ENCODE measurements at regions of chr11 and their contacts with region 1.

Region 1: DNA sequence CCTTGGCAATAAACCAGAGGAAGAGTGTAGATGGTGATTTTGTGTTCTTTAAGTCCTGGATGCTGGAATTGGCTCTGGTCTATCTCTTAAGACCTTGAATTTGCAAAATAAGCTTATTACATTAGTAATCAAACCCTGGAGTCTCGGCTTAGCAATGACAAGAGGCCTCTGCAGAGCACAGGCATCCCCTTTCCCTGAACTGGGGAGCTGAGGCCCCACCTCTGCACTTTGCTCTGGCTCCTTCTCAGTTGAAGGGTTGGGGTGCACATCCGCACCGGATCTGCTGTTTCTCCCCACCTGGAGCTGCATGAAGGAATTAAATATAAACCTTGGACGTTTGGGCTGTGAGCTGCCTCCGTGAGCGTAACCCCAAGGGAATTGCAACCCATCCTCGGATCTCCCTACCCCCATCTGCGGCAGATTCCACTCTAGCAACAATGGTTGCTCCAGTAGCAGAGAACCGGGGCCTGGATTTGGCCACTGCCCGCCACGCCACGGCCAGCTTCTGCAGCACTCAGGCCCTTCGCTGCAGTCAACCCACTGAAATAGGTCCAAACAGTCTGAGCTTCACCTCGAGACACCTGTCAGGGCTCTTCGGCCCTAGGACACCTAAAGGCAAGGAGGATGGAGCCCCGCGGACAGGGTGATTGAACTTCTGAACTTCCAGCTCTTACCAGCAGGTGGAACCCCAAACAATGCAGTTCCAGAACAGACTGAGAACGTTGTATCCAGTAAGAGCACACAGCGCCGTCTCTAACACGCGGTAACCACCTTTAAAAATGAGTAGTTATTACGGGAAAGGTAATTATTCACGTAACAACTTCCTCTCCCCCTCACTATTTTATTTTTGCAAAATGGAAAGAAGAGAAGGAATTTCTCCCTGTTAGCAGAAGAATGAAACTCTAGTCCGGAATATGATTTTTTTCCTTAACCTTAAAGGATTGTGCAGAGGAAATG is 54.8 kb upstream of the CAPRIN1 start:
- DNase-seq: peak; percentile 41 to 63
- ATAC-seq: peak; percentile 98 to 99
- H3K4me3 ChIP-seq: peak overlapping the region in 1 of 4 donors; percentile 10
- H3K27ac ChIP-seq: no peak overlapping the region
- H3K4me1 ChIP-seq: no peaks in the 10 kb centered on the region
- H3K27me3 ChIP-seq: no peaks in the 10 kb centered on the region
- CTCF ChIP-seq: peak; percentile 71 to 83 (median 80)
- POLR2A ChIP-seq: no peak

Region 2: DNA sequence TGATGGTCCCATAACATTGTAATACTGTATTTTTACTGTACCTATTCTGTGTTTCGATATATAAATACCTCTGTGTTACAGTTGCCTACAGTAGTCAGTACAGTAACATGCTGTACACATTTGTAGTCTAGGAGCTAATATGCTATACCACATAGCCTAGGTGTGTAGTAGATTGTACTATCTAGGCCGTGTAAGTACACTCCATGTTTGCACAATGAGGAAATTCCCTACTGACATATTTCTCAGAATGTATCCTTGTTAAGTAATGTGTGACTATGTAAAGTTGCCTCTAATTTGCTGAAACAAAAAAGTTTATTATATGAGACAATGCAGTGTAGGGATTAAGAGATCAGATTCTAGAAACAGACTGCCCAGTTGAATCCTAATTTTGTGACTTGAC is 76.1 kb after region 1 on chr11:
- in situ Hi-C with region 1: no loop called
- intact Hi-C with region 1: loop called (anchors 2 kb)
- DNase-seq: no peak
- ATAC-seq: no peak
- H3K4me3 ChIP-seq: no peak overlapping the region
- H3K27ac ChIP-seq: no peak overlapping the region
- H3K4me1 ChIP-seq: peaks cover 13 to 26% of the 10 kb centered on the region in 2 donors
- H3K27me3 ChIP-seq: no peaks in the 10 kb centered on the region
- CTCF ChIP-seq: no peak
- POLR2A ChIP-seq: no peak

Region 3: GRCh38 chr11:34105079-34105956 is 108.5 kb after region 1 on chr11 and contains the start of gene NAT10:
- in situ Hi-C with region 1: loop called in 2 of 4 experiments (anchors 10 to 25 kb)
- intact Hi-C with region 1: loop called (anchors 2 kb)
- DNase-seq: peak; percentile 97 to 99
- ATAC-seq: peak; percentile 95 to 98
- H3K4me3 ChIP-seq: peak within 1 kb of the TSS; percentile 71 to 97 (median 82)
- H3K27ac ChIP-seq: peak within 1 kb of the TSS; percentile 84 to 94 (median 90)
- H3K4me1 ChIP-seq: peaks cover 19 to 22% of the 10 kb centered on the region in 2 donors
- H3K27me3 ChIP-seq: no peaks in the 10 kb centered on the region
- CTCF ChIP-seq: peak in 4 of 5 experiments; percentile 19 to 44 (median 28)
- POLR2A ChIP-seq: peak; percentile 70 to 74
- total RNA-seq, gene NAT10: 17.2 to 27.7 (median 19.4) TPM

Region 4: DNA sequence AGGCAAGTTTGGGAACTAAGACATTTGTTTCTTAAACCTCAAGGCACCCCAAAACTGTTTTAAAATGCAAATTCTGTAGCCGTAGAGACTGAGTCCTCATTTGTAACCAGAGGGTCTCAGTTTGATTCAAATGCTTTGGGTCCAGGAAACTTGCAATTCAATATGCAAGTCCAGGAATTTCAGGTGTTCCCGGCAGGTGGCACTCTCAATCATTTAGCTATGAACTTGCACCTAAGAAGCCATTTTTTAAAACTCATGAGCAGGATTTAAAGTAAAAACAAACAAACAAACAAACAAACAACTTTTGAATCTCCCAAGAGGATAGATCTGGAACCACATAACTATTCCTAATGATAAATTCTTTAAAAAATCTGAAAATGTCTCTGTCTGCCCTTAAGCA is 369.7 kb after region 1 on chr11:
- in situ Hi-C with region 1: loop called (anchors 5 to 25 kb)
- intact Hi-C with region 1: no loop called
- DNase-seq: no peak
- ATAC-seq: no peak
- H3K4me3 ChIP-seq: no peak overlapping the region
- H3K27ac ChIP-seq: no peak overlapping the region
- H3K4me1 ChIP-seq: no peaks in the 10 kb centered on the region
- H3K27me3 ChIP-seq: no peaks in the 10 kb centered on the region
- CTCF ChIP-seq: peak in 1 of 5 experiments; percentile 31
- POLR2A ChIP-seq: no peak

Measured in gastrocnemius medialis (tissue), 4 donors.